PC-9 (cell line): ENCODE measurements at regions of chr20 and their contacts with region 1.

Region 1: GRCh38 chr20:57432874-57433491 is 41.8 kb downstream of the RBM38 start:
- DNase-seq: peak; percentile 56 to 63
- H3K4me3 ChIP-seq: no peak overlapping the region
- H3K27ac ChIP-seq: no peak overlapping the region
- H3K4me1 ChIP-seq: peaks cover 54% of the 10 kb centered on the region
- H3K27me3 ChIP-seq: no peaks in the 10 kb centered on the region
- CTCF ChIP-seq: no peak

Region 2: GRCh38 chr20:56765162-56766073 is 667.6 kb before region 1 on chr20:
- CTCF ChIA-PET with region 1: no interaction called
- POLR2A ChIA-PET with region 1: no interaction called
- intact Hi-C with region 1: no loop called
- DNase-seq: peak in 1 of 2 experiments; percentile 53
- H3K4me3 ChIP-seq: no peak overlapping the region
- H3K27ac ChIP-seq: no peak overlapping the region
- H3K4me1 ChIP-seq: peaks cover 12% of the 10 kb centered on the region
- H3K27me3 ChIP-seq: no peaks in the 10 kb centered on the region
- CTCF ChIP-seq: no peak

Region 3: DNA sequence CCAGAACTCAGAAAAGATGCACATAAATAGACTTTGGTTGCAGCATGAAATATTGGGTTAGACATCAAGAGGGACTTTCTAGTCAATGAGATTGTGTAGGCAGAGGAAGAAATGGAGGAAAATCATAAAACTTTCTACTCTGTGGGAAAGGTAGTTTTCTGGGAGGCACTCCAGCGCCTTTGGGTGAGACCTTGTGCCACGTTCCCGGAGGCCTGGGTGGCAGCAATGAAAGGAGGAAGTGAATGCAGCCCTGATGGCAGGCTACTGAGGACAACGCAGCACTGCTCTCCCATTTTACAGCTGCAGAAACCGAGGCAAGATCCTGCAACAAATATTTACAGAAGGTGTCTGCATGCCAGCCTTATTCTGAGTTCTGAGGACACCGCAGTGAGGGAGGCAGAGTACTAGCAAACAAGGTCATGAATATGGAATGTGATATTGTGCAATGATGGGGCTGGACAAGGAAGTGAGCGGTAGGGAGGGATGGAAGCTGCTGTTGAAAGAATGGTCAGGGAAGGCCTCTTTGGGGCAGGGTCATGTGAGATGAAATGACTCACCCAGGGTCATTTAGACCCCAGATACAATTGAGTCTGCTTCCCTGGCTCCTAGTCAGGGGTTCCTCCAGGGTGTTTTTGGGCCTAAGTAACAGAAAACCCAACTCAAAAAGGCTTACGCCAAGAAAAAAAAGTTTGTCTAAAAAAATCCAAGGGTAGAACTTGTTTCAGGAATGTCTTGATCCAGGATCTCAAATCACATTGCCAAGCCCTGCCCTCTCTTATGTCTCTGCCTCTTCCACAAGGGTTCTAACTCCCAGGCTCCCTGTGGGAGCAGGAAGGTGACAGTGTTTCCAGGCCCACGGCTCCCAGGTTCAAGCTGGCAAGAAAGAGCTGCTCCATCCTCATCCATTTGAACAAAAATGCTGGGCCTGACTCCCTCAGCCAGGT is 644.7 kb before region 1 on chr20:
- CTCF ChIA-PET with region 1: no interaction called
- POLR2A ChIA-PET with region 1: no interaction called
- intact Hi-C with region 1: loop called (anchors 5 kb)
- DNase-seq: peak; percentile 82 to 99
- H3K4me3 ChIP-seq: peak overlapping the region; percentile 12; the same call in 1 of the 2 replicates
- H3K27ac ChIP-seq: peak overlapping the region; percentile 96
- H3K4me1 ChIP-seq: peaks cover 46% of the 10 kb centered on the region
- H3K27me3 ChIP-seq: no peaks in the 10 kb centered on the region
- CTCF ChIP-seq: no peak

Region 4: DNA sequence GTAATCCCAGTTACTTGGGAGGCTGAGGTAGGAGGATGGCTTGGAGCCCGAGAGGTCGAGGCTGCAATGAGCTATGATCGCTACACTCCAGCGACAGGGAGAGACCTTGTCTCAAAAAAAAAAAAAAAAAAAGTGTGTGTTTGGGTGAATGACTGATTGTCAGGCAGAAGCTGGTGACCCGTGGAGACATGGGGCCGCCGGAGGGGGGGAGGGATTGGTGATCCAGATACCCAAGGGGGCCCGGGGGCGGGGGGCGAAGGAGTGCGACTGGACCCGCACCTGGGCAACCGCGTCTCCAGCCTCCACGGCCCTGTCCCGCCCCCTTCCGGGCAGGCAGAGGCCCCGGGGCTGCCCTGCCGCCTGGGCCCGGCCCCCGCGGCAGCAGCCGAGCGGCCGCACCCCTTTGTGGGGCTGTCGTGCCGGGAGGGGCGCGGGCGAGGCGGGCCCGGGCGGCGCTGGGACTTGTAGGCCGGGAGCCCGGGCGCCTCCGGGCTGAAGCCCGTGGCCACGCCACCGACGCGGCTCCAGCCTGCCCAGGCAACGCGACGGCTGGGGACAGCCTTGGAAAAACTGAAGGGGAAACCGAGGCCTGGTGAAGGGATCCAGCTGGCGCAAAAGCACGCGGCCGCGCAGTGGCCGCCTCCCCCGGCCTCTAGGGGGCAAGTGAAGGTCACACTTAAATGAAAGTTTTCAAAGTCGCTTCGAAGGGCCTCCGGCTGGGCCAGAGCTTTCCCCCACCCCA is 43.9 kb before region 1 on chr20:
- CTCF ChIA-PET with region 1: no interaction called
- POLR2A ChIA-PET with region 1: interaction called, 43 read pairs
- intact Hi-C with region 1: loop called (anchors 2 kb)
- DNase-seq: peak; percentile 68 to 90
- H3K4me3 ChIP-seq: peak overlapping the region; percentile 58
- H3K27ac ChIP-seq: no peak overlapping the region
- H3K4me1 ChIP-seq: peaks cover 12% of the 10 kb centered on the region
- H3K27me3 ChIP-seq: no peaks in the 10 kb centered on the region
- CTCF ChIP-seq: no peak

Region 5: DNA sequence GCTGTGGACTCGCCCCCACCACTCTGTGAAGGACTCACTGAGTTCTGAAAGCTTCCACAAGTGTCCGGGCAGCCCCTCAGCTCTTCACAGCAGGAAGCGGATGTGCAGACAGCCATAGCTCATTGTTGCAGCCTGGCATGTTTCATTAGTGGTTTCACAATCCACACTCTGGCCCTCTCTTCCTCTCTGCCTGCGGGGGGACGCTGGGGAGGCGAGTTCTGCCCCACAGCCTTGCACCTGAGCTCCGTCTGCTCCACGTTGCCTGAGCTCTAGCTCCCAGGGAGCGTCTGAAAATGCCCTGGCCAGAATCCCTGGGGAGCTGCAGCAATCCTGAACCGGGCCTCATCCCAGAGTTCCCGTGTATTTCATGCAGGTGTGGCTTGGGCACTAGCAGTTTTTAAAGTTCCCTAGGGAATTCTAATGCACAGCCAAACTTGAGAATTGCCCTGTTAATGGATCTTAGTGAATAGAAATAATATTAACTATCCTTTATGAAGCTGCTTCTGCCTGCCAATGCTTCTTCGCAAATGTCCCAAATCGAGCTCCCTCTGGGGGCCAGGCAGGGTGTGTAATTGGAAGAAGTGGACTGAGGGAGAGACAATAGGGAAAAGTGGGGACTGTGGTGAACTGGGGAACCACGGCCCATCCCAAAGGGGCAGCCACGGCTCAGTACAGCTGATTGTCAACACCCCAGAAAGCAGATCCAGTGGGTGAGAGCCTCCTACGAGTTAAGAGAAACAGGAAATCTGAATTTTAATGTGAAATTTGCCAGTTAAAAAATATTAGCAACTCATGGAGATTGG is 40.5 kb after region 1 on chr20:
- CTCF ChIA-PET with region 1: no interaction called
- POLR2A ChIA-PET with region 1: interaction called, 3 read pairs
- intact Hi-C with region 1: loop called (anchors 5 kb)
- DNase-seq: no peak
- H3K4me3 ChIP-seq: no peak overlapping the region
- H3K27ac ChIP-seq: no peak overlapping the region
- H3K4me1 ChIP-seq: no peaks in the 10 kb centered on the region
- H3K27me3 ChIP-seq: peaks cover 89% of the 10 kb centered on the region
- CTCF ChIP-seq: no peak

Region 6: DNA sequence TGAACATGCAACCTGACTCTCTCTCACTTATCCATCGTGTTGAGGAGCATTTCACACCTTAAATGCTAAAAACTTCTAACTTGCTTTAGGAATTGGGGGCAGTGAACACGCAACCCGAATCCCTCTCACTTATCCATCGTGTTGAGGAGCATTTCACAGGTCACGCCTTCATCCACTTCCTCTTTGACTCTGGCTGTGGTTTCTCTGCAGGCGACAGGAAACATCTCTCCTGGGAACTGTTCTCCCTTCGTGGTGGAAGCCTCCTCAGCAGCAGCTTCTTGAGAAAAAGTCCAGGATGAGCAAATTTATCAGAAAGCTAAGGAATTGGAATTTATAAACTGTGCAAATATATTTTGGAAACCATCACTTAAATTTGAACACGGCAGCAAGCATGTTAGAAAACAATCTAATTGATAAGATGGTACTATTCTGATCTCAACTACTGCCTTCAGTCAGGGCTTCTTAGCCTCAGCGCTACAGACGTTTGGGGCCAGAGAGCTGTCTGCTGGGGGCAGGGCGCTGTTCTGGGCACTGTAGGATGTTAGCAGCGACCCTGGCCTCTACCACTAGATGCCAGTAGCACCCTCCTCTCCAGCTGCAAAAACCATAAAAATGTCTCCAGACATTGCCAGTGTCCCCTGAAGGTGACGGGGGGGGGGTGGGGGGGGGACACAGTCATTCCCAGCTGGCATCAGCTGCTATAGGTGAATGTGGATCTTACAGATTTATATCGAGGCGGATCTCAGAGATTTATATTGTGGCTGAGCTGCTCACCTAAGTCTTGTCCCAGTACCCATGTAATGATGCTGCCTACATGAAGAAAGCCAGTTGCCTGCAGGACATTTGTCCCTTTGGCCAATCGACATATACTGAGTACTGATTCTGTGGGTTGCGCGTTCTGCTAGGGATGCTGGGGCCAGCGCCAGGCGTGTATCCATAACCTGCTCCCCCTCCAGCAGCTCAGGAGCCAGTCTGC is 65.7 kb after region 1 on chr20:
- CTCF ChIA-PET with region 1: no interaction called
- POLR2A ChIA-PET with region 1: no interaction called
- intact Hi-C with region 1: loop called (anchors 2 kb)
- DNase-seq: peak in 1 of 2 experiments; percentile 27
- H3K4me3 ChIP-seq: no peak overlapping the region
- H3K27ac ChIP-seq: no peak overlapping the region
- H3K4me1 ChIP-seq: peaks cover 12% of the 10 kb centered on the region
- H3K27me3 ChIP-seq: no peaks in the 10 kb centered on the region
- CTCF ChIP-seq: peak; percentile 61

Region 7: GRCh38 chr20:57622579-57623377 is 189.8 kb after region 1 on chr20:
- CTCF ChIA-PET with region 1: no interaction called
- POLR2A ChIA-PET with region 1: interaction called, 21 read pairs
- intact Hi-C with region 1: no loop called
- DNase-seq: peak; percentile 83 to 90
- H3K4me3 ChIP-seq: no peak overlapping the region
- H3K27ac ChIP-seq: no peak overlapping the region
- H3K4me1 ChIP-seq: peaks cover 24% of the 10 kb centered on the region
- H3K27me3 ChIP-seq: no peaks in the 10 kb centered on the region
- CTCF ChIP-seq: peak; percentile 99

Region 8: GRCh38 chr20:57698117-57698866 is 265.3 kb after region 1 on chr20:
- CTCF ChIA-PET with region 1: no interaction called
- POLR2A ChIA-PET with region 1: no interaction called
- intact Hi-C with region 1: loop called (anchors 10 kb)
- DNase-seq: peak; percentile 92 to 100
- H3K4me3 ChIP-seq: peak overlapping the region; percentile 44; the same call in 1 of the 2 replicates
- H3K27ac ChIP-seq: peak overlapping the region; percentile 96
- H3K4me1 ChIP-seq: peaks cover 96% of the 10 kb centered on the region
- H3K27me3 ChIP-seq: no peaks in the 10 kb centered on the region
- CTCF ChIP-seq: no peak